ENCODE measurements at regions of chr17 and their contacts with region 1.

Region 1: DNA sequence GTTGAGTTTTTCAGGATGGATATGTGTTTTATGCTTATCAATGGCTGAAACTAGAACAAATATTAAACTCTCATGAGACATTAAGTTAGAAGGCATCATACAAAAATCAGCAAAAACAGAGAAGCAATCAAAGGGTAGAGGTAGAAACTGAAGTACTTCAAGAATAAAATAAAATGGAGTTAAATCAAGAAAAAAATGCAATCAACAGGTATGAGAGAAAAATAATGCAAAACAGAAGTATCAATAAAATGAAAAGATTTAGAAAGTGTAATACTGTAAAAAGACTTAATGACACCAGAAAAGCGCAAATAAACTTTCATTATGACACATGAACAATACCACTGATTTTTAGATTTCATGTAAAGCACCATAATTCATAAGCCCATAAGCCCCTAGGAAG is 112.3 kb downstream of the SKAP1 start:
- DNase-seq: no peak
- ATAC-seq: no peak
- H3K4me3 ChIP-seq: no peak overlapping the region
- H3K4me3 Mint-ChIP-seq: no peak overlapping the region
- H3K27ac ChIP-seq: no peak overlapping the region
- H3K27ac Mint-ChIP-seq: peak overlapping the region; percentile 14
- H3K4me1 ChIP-seq: no peaks in the 10 kb centered on the region
- H3K4me1 Mint-ChIP-seq: peaks cover 29% of the 10 kb centered on the region
- H3K27me3 ChIP-seq: no peaks in the 10 kb centered on the region
- H3K27me3 Mint-ChIP-seq: no peaks in the 10 kb centered on the region
- CTCF ChIP-seq: no peak

Region 2: DNA sequence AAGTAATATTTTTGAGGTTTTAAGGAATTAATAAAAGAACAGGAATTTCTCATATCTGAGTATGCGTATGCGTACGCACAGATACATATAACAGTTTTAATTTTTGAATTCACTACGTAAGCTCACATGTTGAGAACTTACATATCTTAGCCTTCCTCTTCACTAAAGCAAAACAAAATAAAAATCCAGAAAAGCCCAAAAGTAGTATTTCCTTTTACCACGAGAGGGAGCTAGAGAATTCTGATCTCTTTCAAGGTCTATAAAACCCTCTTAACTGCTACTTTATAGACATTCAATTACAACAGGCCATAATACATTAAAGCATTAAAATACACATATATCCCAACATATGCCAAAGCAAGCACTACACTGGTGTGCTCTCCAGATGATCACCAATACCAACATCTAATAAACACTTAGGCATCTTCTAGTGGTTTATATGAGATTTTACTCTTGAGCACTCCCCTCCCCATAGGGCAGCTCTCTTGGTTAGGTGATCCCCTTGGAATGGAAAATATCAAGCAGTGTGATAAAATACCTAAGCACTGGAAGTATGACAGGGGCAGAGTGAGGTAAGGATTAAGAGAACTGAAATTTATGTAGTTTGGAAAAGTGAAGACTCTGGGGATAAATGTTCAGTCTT is 18.2 kb after region 1 on chr17:
- CTCF ChIA-PET with region 1: interaction called, 10 read pairs
- POLR2A ChIA-PET with region 1: interaction called, 3 read pairs
- intact Hi-C with region 1: no loop called
- DNase-seq: peak in 2 of 9 experiments; percentile 68 to 76
- ATAC-seq: peak; percentile 67
- H3K4me3 ChIP-seq: no peak overlapping the region
- H3K4me3 Mint-ChIP-seq: no peak overlapping the region
- H3K27ac ChIP-seq: no peak overlapping the region
- H3K27ac Mint-ChIP-seq: no peak overlapping the region
- H3K4me1 ChIP-seq: no peaks in the 10 kb centered on the region
- H3K4me1 Mint-ChIP-seq: peaks cover 9% of the 10 kb centered on the region
- H3K27me3 ChIP-seq: no peaks in the 10 kb centered on the region
- H3K27me3 Mint-ChIP-seq: no peaks in the 10 kb centered on the region
- CTCF ChIP-seq: peak; percentile 65

Measured in CD8-positive, alpha-beta T cell (primary cell).